ENCODE measurements at regions of chr5 and their contacts with region 1.

Region 1: GRCh38 chr5:134077926-134078580 is 36.4 kb upstream of the TCF7 start:
- DNase-seq: no peak
- H3K4me3 ChIP-seq: no peak overlapping the region
- H3K4me3 Mint-ChIP-seq: peak overlapping the region in 7 of 8 donors; percentile 17 to 76 (median 57)
- H3K27ac ChIP-seq: no peak overlapping the region
- H3K27ac Mint-ChIP-seq: peak overlapping the region; percentile 68 to 98 (median 89)
- H3K4me1 ChIP-seq: peaks cover 59% of the 10 kb centered on the region
- H3K4me1 Mint-ChIP-seq: peaks cover 54 to 77% (median 59%) of the 10 kb centered on the region in 4 donors
- H3K27me3 ChIP-seq: no peaks in the 10 kb centered on the region
- H3K27me3 Mint-ChIP-seq: no peaks in the 10 kb centered on the region

Region 2: DNA sequence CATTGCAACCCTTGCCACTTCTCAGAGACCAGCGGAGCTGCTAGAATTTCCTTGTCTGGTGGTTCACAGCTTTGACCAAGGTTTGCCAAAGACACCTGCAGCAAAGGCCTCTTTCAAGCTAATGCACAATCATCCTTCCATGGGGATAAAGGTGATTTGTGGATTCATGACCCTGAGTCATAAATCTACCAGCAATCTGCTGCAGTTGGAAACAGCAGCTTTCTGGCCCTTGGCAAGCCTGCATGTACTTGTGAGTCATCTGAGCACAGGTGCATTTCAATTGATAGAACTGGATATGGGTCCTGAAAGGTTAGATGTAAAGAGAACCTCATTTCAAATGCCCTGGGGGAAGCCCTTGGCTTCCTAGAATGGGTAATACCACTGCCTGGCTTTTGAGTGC is 14.8 kb after region 1 on chr5:
- CTCF ChIA-PET with region 1: interaction called, 10 read pairs
- POLR2A ChIA-PET with region 1: interaction called, 58 read pairs
- intact Hi-C with region 1: loop called (anchors 1 kb)
- DNase-seq: no peak
- H3K4me3 ChIP-seq: no peak overlapping the region
- H3K4me3 Mint-ChIP-seq: peak overlapping the region in 7 of 8 donors; percentile 9 to 77 (median 57)
- H3K27ac ChIP-seq: no peak overlapping the region
- H3K27ac Mint-ChIP-seq: peak overlapping the region; percentile 72 to 94 (median 79)
- H3K4me1 ChIP-seq: peaks cover 79% of the 10 kb centered on the region
- H3K4me1 Mint-ChIP-seq: peaks cover 58 to 86% (median 75%) of the 10 kb centered on the region in 4 donors
- H3K27me3 ChIP-seq: no peaks in the 10 kb centered on the region
- H3K27me3 Mint-ChIP-seq: no peaks in the 10 kb centered on the region

Region 3: DNA sequence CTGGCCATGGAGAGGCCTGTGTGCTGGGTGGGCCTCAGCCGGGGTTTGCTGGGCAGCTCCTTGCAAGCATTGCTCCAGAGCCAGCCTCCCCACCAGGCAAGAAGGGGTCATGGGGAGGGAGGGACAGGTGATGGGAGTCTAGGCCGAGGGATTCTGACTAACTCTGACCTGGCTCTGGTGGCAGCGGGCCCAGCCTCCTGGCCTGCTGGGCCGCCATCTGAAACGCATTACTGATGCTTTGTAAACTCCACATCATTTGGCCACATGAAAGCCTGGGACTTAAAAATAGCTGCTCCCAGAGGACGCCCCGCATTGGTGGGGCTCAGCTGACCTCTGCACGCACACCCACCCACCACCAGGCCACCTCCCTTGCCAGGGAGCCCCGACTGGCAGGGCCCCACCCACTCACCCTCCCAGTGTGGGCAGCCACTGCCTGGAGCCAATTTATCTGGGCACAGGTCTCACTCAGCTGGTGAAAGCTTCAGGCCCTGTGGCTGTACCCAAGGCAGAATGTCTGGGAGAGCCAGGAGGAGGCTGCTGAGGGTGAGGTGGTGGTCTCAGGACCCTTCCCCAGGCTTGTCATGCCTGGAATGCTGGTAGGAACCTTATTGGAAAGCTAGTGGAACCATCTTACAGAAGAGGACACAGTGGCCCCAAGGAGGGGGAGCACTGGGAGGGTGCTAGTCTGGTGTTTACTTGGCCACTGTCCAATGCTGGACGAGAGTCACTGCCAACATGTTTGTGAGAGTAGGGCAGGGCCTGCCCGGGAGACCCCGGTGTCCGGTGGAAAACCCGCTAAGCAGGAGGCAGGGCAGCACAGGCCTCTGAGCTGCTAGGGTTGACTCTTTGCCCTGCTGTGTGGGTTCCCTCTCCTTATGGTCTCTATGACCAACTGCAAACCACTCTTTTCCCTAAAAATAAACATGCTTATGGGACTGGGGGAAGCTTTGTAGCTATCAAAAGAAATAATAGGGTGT is 47.3 kb after region 1 on chr5:
- CTCF ChIA-PET with region 1: interaction called, 5 read pairs
- POLR2A ChIA-PET with region 1: interaction called, 48 read pairs
- intact Hi-C with region 1: no loop called
- DNase-seq: no peak
- H3K4me3 ChIP-seq: peak overlapping the region; percentile 36 to 63
- H3K4me3 Mint-ChIP-seq: peak overlapping the region; percentile 86 to 99 (median 96)
- H3K27ac ChIP-seq: peak overlapping the region; percentile 97
- H3K27ac Mint-ChIP-seq: peak overlapping the region; percentile 95 to 99 (median 98)
- H3K4me1 ChIP-seq: peaks cover 100% of the 10 kb centered on the region
- H3K4me1 Mint-ChIP-seq: peaks cover 44 to 99% (median 77%) of the 10 kb centered on the region in 4 donors
- H3K27me3 ChIP-seq: no peaks in the 10 kb centered on the region
- H3K27me3 Mint-ChIP-seq: no peaks in the 10 kb centered on the region